ENCODE measurements at regions of chr4 and their contacts with region 1.

Region 1: GRCh38 chr4:88378691-88379559 is at the start of gene HERC6:
- DNase-seq: peak; percentile 84 to 86 (median 84)
- ATAC-seq: peak; percentile 97
- H3K4me3 ChIP-seq: peak within 1 kb of the TSS; percentile 99
- H3K4me1 ChIP-seq: no peaks in the 10 kb centered on the region
- CTCF ChIP-seq: peak; percentile 76
- total RNA-seq, gene HERC6: 7.5 to 8.8 (median 8.2) TPM

Region 2: GRCh38 chr4:88456757-88457306 is 77.9 kb after region 1 on chr4 and contains the start of gene HERC5:
- intact Hi-C with region 1: loop called in 1 of 2 experiments (anchors 5 kb)
- DNase-seq: peak; percentile 93 to 94 (median 93)
- ATAC-seq: peak; percentile 97
- H3K4me3 ChIP-seq: peak within 1 kb of the TSS; percentile 3
- H3K4me1 ChIP-seq: no peaks in the 10 kb centered on the region
- CTCF ChIP-seq: peak; percentile 39
- total RNA-seq, gene HERC5: 1.8 to 4.0 (median 1.9) TPM